Activated B cell treated with CpG ODN at 0.5 μM for 24 hours (primary cell): ENCODE measurements at regions of chr6 and their contacts with region 1.

Region 1: GRCh38 chr6:141988954-141989705 is 143.6 kb upstream of the GJE1 start:
- DNase-seq: no peak
- ATAC-seq: no peak
- H3K4me3 Mint-ChIP-seq: no peak overlapping the region
- H3K27ac Mint-ChIP-seq: no peak overlapping the region
- H3K4me1 Mint-ChIP-seq: no peaks in the 10 kb centered on the region
- H3K27me3 Mint-ChIP-seq: no peaks in the 10 kb centered on the region
- CTCF ChIP-seq: no peak

Region 2: DNA sequence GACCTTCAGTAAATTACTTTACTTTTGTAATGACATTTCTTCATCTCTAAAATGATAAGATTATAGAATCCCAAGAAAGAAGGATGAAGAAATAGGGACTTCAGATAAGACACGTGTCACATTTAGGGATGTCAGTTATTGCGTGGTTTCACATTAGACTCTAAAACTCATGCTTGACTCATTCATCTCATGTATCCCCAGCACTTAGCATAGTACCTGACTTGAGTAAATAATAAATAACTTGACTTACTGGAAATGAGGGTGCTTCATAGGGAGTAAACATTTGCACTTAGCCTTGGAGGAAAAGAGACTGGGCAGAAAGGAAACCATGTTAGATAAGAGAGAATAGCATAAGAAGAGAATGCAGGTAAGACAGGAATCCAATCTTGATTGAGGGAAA is 195.2 kb after region 1 on chr6:
- CTCF ChIA-PET with region 1: no interaction called
- POLR2A ChIA-PET with region 1: no interaction called
- intact Hi-C with region 1: no loop called
- DNase-seq: no peak
- ATAC-seq: no peak
- H3K4me3 Mint-ChIP-seq: no peak overlapping the region
- H3K27ac Mint-ChIP-seq: no peak overlapping the region
- H3K4me1 Mint-ChIP-seq: peaks cover 4% of the 10 kb centered on the region
- H3K27me3 Mint-ChIP-seq: no peaks in the 10 kb centered on the region
- CTCF ChIP-seq: no peak

Region 3: GRCh38 chr6:142207265-142207877 is 218.2 kb after region 1 on chr6:
- CTCF ChIA-PET with region 1: interaction called, 5 read pairs
- POLR2A ChIA-PET with region 1: no interaction called
- intact Hi-C with region 1: loop called (anchors 2 kb)
- DNase-seq: no peak
- ATAC-seq: peak; percentile 34
- H3K4me3 Mint-ChIP-seq: no peak overlapping the region
- H3K27ac Mint-ChIP-seq: no peak overlapping the region
- H3K4me1 Mint-ChIP-seq: no peaks in the 10 kb centered on the region
- H3K27me3 Mint-ChIP-seq: no peaks in the 10 kb centered on the region
- CTCF ChIP-seq: no peak

Region 4: DNA sequence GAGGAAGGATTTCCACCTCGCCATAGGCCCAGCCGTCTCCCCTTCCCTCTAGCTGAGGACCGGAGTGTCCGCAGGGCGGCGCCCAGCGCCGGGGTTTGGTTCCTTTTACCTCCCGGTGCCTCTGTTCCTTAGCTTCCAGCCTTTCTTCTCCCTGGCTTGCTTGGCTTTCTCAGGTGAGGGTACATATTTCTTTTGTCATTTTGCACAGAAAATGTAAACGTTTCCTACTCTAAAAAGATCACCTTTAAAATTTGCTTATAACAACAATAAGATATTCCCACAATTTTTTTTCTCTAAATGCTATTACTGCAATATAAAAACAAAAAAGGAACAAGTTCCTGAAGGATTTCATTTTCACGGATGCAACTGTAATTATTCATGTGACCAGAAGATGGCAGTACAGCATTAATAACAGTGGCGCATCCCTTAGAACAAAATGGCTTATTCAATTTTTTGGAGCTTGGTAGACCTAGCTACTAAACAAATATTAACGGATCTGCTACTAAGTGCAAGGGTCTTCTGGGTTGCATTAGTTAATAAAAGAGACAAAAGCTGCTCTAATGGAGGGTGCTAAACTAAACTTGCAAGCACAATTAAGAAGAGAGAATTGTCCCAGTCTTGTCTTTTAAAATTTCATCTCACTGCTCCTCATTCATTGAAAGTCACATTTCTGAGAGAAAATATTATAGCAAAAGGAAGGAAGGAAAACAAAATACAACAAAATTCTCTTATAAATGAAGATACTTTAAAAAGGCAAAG is 485.6 kb after region 1 on chr6:
- CTCF ChIA-PET with region 1: no interaction called
- POLR2A ChIA-PET with region 1: no interaction called
- intact Hi-C with region 1: no loop called
- DNase-seq: no peak
- ATAC-seq: peak; percentile 54
- H3K4me3 Mint-ChIP-seq: no peak overlapping the region
- H3K27ac Mint-ChIP-seq: no peak overlapping the region
- H3K4me1 Mint-ChIP-seq: no peaks in the 10 kb centered on the region
- H3K27me3 Mint-ChIP-seq: peaks cover 3% of the 10 kb centered on the region
- CTCF ChIP-seq: peak; percentile 81